PC-9 (cell line): ENCODE measurements at regions of chr12 and their contacts with region 1.

Region 1: DNA sequence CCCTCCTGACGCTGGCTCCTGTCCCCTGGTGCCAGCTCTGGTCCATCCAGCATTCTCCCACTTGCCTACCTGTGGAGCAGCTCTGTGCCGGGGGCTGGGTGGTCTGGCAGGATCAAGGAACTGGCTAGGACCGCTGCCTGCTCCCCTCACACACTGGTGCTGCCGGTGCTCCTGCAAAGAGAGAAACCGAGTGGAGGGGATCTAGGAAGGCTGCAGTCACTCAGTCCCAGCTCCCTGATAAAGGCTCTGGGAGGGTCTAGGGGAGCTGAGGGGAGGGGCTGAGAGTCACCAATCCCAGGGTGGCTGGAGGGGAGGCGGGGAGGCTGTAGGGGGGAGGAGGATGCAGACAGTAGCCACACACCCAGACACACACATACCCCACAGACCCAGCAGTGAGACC is at the start of gene TAC3:
- DNase-seq: no peak
- H3K4me3 ChIP-seq: no peak within 1 kb of the TSS
- H3K27ac ChIP-seq: no peak within 1 kb of the TSS
- H3K4me1 ChIP-seq: peaks cover 10% of the 10 kb centered on the region
- H3K27me3 ChIP-seq: peaks cover 48% of the 10 kb centered on the region
- CTCF ChIP-seq: no peak
- total RNA-seq, gene TAC3: not detected in 2 replicates

Region 2: DNA sequence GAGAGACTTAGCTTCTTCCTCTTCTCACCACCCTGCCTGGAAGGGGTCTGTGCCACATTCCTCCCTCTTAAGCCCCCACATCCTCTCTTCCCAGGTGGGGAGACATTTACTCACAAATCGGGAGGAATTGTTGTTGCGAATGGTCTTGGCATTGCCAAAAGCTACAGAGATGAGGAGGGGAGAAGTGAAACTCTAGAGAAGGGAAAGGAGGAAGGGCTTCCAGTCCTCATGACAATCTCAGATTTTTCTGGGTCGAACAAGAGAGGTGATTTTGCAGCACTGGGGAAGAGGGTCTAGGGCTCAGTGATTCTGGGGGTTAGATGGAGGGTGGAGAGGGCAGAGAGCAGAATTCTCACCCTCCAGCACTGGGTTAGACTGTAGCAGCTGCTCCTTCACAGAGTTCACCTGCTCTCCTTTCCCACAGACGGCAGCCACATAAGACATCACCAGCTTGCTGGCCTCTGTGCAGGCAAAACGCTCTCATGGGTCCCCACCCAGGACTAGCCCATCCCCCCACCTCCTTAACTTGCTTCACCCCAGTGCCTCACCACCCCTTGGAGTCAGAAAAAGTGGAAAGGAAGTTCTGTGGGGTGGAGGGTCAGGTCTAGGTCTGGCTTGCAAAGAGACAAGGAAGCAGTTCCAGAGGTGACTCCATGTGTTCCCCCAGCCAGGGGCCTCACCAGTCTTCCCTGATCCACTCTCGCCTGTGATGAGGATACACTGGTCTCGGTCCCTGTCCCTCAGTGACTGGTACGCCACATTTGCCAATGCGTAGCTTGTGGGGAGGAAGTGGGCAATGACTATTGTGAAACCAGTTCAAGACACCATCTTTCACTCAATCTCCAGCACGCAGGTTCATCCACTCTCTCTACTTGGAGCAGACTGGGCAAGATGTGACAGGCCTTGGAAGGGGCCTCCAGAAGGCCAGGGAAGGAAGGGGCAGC is 30.9 kb after region 1 on chr12:
- CTCF ChIA-PET with region 1: interaction called, 15 read pairs
- POLR2A ChIA-PET with region 1: no interaction called
- intact Hi-C with region 1: no loop called
- DNase-seq: no peak
- H3K4me3 ChIP-seq: no peak overlapping the region
- H3K27ac ChIP-seq: no peak overlapping the region
- H3K4me1 ChIP-seq: no peaks in the 10 kb centered on the region
- H3K27me3 ChIP-seq: peaks cover 65% of the 10 kb centered on the region; the same call in 1 of the 2 replicates
- CTCF ChIP-seq: no peak

Region 3: GRCh38 chr12:57101844-57102695 is 85.8 kb after region 1 on chr12:
- CTCF ChIA-PET with region 1: no interaction called
- POLR2A ChIA-PET with region 1: interaction called, 11 read pairs
- intact Hi-C with region 1: no loop called
- DNase-seq: no peak
- H3K4me3 ChIP-seq: no peak overlapping the region
- H3K27ac ChIP-seq: no peak overlapping the region
- H3K4me1 ChIP-seq: no peaks in the 10 kb centered on the region
- H3K27me3 ChIP-seq: no peaks in the 10 kb centered on the region
- CTCF ChIP-seq: no peak

Region 4: GRCh38 chr12:57193706-57194652 is 177.7 kb after region 1 on chr12:
- CTCF ChIA-PET with region 1: no interaction called
- POLR2A ChIA-PET with region 1: interaction called, 16 read pairs
- intact Hi-C with region 1: no loop called
- DNase-seq: no peak
- H3K4me3 ChIP-seq: no peak overlapping the region
- H3K27ac ChIP-seq: no peak overlapping the region
- H3K4me1 ChIP-seq: no peaks in the 10 kb centered on the region
- H3K27me3 ChIP-seq: no peaks in the 10 kb centered on the region
- CTCF ChIP-seq: no peak

Region 5: GRCh38 chr12:57213058-57213715 is 196.9 kb after region 1 on chr12:
- CTCF ChIA-PET with region 1: no interaction called
- POLR2A ChIA-PET with region 1: no interaction called
- intact Hi-C with region 1: no loop called
- DNase-seq: peak; percentile 69 to 92
- H3K4me3 ChIP-seq: peak overlapping the region; percentile 36; the same call in 1 of the 2 replicates
- H3K27ac ChIP-seq: peak overlapping the region; percentile 60
- H3K4me1 ChIP-seq: peaks cover 17% of the 10 kb centered on the region
- H3K27me3 ChIP-seq: no peaks in the 10 kb centered on the region
- CTCF ChIP-seq: peak; percentile 92

Region 6: GRCh38 chr12:57309420-57309819 is 293.1 kb after region 1 on chr12:
- CTCF ChIA-PET with region 1: no interaction called
- POLR2A ChIA-PET with region 1: no interaction called
- intact Hi-C with region 1: no loop called
- DNase-seq: peak in 1 of 2 experiments; percentile 77
- H3K4me3 ChIP-seq: no peak overlapping the region
- H3K27ac ChIP-seq: peak overlapping the region; percentile 59
- H3K4me1 ChIP-seq: peaks cover 19% of the 10 kb centered on the region
- H3K27me3 ChIP-seq: no peaks in the 10 kb centered on the region
- CTCF ChIP-seq: no peak

Region 7: GRCh38 chr12:57546438-57547383 is 530.4 kb after region 1 on chr12 and contains the start of gene DCTN2:
- CTCF ChIA-PET with region 1: no interaction called
- POLR2A ChIA-PET with region 1: no interaction called
- intact Hi-C with region 1: no loop called
- DNase-seq: peak; percentile 89 to 93
- H3K4me3 ChIP-seq: peak within 1 kb of the TSS; percentile 59
- H3K27ac ChIP-seq: peak within 1 kb of the TSS; percentile 45
- H3K4me1 ChIP-seq: peaks cover 9% of the 10 kb centered on the region
- H3K27me3 ChIP-seq: no peaks in the 10 kb centered on the region
- CTCF ChIP-seq: no peak; the same call in 1 of the 2 replicates
- total RNA-seq, gene DCTN2: 93.4 and 105 TPM in 2 replicates